Kidney (tissue), 22 donors: ENCODE measurements at regions of chr5 and their contacts with region 1.

Region 1: GRCh38 chr5:746258-746761 is 38.2 kb downstream of the ZDHHC11B start:
- DNase-seq: peak in 1 of 5 donors; percentile 75
- H3K4me3 ChIP-seq: no peak overlapping the region
- H3K27ac ChIP-seq: no peak overlapping the region
- H3K4me1 ChIP-seq: no peaks in the 10 kb centered on the region
- H3K27me3 ChIP-seq: no peaks in the 10 kb centered on the region
- CTCF ChIP-seq: no peak

Region 2: DNA sequence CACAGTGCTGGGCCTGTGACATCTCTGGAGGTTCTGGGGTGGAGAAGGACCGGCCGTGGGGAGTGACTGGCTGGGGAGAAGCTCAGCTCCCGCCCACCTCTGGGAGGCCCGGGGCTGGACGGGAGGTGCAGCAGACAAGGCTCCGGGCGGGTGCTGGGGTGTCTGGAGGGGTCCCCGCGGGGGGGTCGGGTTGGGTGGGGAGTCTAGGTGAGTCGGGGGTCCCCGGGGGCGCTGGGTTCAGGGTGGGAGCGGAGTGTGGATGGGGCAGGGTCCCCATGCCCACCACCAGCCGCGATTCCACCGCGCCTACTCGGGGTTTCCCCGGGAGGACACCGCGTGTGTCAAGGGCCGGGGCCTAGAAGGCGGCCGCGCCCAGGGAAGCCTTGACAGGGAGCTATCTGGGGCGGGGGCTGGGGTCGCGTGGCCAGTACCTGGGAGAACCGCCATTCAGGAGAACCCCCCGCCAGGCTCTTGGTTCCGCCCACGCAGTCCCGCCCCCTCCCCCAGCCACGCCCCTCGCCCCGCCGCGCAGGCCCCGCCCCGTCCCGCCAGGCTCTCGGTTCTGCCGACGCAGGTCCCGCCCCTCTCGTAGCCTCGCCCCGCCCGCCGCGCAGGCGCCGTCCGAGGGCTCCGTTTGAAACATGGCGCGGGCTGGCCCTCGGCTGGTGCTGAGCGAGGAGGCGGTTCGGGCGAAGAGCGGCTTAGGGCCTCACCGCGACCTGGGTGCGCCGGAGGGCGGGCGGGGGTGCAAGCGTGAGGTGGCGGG is 134.4 kb before region 1 on chr5 and contains the start of gene CEP72:
- intact Hi-C with region 1: no loop called
- DNase-seq: peak; percentile 93 to 97 (median 96)
- H3K4me3 ChIP-seq: peak within 1 kb of the TSS; percentile 61 to 83 (median 77)
- H3K27ac ChIP-seq: no peak within 1 kb of the TSS
- H3K4me1 ChIP-seq: peaks cover 0 to 8% (median 3%) of the 10 kb centered on the region in 3 donors
- H3K27me3 ChIP-seq: no peaks in the 10 kb centered on the region
- CTCF ChIP-seq: no peak
- total RNA-seq, gene CEP72: 7.8 TPM

Region 3: DNA sequence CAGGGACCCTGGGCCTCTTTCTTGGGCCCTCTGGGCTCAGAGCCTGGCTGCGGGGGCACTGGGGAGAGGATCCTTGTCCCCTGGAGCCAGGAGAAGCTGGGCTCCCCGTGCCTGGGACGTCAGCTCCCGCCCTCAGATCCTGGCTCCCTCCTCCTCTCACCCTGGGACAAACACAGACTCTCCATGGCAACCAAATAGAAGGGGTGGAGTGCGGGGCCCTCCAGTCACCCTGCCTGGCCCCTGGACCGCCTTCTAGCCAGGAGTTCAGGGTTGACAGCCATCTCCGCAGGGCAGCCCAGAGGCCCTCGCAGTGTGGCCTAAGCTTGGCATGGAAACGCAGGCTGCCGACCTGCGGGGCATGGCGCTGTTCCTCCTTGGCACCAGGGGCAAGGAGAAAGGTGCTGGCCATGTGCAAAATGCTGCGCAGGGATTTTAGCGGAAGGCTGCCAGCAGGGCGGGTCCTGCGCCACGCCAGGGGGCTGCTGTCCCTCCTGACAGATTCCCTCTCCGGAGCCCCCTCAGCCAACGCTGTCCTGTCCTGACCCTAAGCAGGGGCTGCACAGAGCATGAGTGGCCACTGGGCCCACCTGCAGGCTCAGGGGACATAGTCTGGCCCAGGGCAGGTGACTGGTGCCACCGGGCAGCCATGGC is 103.5 kb after region 1 on chr5:
- intact Hi-C with region 1: loop called (anchors 5 kb)
- DNase-seq: peak; percentile 64 to 85 (median 79)
- H3K4me3 ChIP-seq: no peak overlapping the region
- H3K27ac ChIP-seq: no peak overlapping the region
- H3K4me1 ChIP-seq: peaks cover 0 to 3% (median 0%) of the 10 kb centered on the region in 3 donors
- H3K27me3 ChIP-seq: peaks cover 2% of the 10 kb centered on the region
- CTCF ChIP-seq: no peak